BJ (cell line): ENCODE measurements at regions of chr1 and their contacts with region 1.

Region 1: DNA sequence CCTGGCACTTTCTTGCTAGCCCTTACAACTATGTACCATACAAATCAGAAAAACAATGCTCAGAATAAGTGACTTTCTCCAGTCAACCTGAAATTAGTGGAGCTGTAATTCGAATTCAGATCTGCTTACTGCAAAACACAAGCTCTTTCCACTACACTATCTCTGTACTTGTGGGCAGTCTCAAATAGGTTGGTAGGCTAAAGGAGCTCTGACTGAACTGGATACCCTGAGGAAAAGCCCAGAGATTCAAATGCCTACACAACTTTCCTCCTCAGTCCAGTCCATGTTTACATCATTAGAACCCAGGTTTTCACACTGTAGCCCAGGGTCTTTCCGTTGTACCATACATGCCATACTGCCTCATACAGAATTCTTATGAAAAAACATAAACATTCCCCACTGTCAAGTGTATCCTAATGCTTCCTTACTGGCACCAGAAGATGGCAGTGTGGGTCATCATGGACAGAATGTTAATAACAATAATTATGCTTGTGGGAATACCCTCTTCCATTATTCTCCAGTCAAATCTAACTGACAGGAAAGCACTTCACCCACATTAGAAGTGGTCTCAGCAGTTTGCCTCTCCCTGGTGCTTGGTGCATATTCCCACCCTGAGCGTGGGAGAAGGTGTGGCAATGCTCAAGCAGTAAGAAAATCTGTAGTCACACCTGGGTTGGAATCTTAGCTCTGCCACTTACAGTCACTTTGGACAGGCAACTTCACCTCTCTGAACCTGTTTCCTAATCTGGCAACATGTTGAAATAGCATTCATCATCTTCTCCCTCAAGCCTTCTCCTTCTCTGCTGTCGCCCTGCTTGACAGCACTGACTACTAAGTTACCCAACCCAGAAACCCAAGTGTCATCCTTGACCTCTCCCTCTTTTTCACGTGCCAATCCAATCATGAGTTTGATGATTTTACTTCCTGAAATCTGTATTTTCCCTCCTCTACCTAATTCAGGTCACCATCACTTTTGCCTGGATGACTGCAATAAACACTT is 14.4 kb upstream of the ZFYVE9 start:
- DNase-seq: no peak
- H3K4me3 ChIP-seq: no peak overlapping the region
- H3K27me3 ChIP-seq: no peaks in the 10 kb centered on the region; the same call in 1 of the 2 replicates
- CTCF ChIP-seq: peak; percentile 85

Region 2: GRCh38 chr1:52111492-52111891 is 16.0 kb before region 1 on chr1:
- CTCF ChIA-PET with region 1: interaction called, 11 read pairs
- POLR2A ChIA-PET with region 1: interaction called, 3 read pairs
- DNase-seq: no peak
- H3K4me3 ChIP-seq: no peak overlapping the region
- H3K27me3 ChIP-seq: no peaks in the 10 kb centered on the region
- CTCF ChIP-seq: no peak

Region 3: DNA sequence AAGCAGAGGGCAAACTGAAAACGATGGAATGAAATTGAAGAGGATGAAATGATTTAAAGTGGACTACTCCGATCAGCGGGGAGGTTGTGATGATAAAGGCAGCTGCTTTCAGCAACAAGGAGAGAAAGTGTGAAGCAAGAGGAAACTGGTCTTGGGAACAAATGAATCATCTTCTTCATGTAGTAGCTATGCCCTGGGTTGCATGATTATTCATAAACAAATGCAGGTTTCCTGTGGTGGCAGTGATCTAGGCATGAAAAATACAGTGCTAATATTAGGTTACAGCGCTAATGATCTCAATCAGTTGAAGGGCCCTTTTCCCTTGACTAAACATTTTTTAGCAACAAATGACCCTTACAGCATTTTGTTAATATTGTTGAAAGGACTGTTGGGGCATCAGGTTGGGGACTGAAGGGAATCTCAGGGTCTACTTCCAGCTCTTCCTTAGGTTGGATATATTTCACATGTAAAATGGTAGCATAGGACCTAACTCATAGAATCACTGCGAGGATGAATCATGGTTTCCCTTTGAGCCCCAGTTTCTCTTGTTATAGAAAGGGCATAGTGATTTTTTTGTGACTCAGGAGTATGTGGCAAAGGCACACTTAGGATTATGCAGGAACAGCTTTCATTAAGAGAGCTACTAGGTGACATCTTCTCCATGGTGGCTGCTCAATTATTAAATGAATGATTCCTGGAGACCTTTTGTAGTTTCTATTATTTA is 12.5 kb after region 1 on chr1:
- CTCF ChIA-PET with region 1: interaction called, 18 read pairs
- POLR2A ChIA-PET with region 1: no interaction called
- DNase-seq: no peak
- H3K4me3 ChIP-seq: no peak overlapping the region
- H3K27me3 ChIP-seq: no peaks in the 10 kb centered on the region
- CTCF ChIP-seq: no peak

Region 4: DNA sequence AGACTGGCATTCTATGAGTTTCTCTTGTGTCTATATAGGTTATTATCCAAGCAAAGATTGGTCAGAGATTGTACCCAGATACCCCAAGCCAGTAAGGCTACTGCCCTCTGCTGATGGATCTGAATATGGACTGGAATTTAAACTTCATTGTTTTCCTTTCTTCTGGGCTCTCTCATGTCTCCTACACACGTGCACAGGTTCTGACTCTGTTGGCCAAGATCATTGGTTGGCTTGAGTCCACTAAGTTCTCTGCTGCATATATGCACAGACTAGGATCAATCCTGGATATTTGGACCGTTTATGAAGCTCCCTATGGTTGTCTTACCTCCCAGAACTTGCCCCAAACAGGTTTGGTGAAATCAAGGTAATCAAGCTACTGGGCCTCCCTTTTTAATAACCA is 168.9 kb after region 1 on chr1:
- CTCF ChIA-PET with region 1: interaction called, 31 read pairs
- POLR2A ChIA-PET with region 1: no interaction called
- DNase-seq: no peak
- H3K4me3 ChIP-seq: no peak overlapping the region
- H3K27me3 ChIP-seq: no peaks in the 10 kb centered on the region
- CTCF ChIP-seq: peak; percentile 84

Region 5: DNA sequence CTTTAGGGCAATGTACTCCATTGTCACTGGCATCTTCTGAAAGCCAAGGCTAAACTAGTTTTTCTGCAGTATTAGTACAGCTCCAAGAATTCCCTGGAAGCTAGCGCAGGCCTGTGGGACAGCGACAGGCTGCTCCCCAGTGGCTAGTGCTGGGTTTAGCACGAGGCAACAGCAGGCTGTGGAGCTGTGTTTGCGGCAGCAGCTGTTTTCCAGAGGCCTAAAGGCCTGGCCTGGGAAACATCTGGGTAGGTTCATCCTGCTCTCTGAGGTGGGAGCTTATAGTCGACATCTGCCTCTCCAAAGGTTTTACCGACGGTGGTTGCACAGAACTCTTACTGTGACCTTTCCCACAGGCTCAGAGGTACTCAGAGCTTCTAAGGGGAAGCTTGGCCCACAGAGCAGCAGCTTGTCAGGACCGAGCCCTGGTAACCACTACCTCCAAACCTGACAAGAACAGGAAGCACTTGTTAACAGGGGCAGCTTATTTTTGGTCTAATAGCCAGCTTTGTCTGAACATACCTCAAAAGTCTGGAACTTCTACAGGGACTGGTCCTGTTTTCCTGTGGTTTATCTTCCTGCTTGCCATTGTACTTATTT is 221.3 kb after region 1 on chr1:
- CTCF ChIA-PET with region 1: interaction called, 17 read pairs
- POLR2A ChIA-PET with region 1: no interaction called
- DNase-seq: no peak
- H3K4me3 ChIP-seq: no peak overlapping the region
- H3K27me3 ChIP-seq: no peaks in the 10 kb centered on the region
- CTCF ChIP-seq: peak; percentile 61